ENCODE measurements at regions of chr4 and their contacts with region 1.

Region 1: GRCh38 chr4:35970366-35970960 is 273.9 kb downstream of the ARAP2 start:
- DNase-seq: no peak
- H3K4me3 Mint-ChIP-seq: no peak overlapping the region
- H3K27ac Mint-ChIP-seq: no peak overlapping the region
- H3K4me1 Mint-ChIP-seq: peaks cover 7% of the 10 kb centered on the region
- H3K27me3 Mint-ChIP-seq: peaks cover 5% of the 10 kb centered on the region

Region 2: DNA sequence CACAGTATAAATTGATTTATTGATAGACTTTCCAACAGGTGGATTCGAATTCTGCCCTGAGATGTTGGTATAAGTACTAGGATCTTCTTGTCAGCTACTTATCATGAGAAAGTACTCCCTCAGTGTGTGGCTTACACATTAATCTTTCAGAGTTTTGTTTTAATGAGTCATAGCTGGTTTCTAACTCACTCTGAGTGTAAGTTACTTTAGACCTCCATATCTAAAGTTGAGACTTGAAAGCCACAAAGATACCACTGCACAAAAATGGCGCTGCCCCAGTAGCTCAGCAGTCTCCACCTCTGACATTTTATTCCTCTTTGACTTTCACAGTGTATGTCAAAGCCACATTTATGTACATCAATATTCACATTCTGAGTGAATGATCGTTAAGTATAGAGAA is 44.7 kb before region 1 on chr4:
- intact Hi-C with region 1: no loop called
- DNase-seq: no peak
- H3K4me3 Mint-ChIP-seq: no peak overlapping the region
- H3K27ac Mint-ChIP-seq: no peak overlapping the region
- H3K4me1 Mint-ChIP-seq: peaks cover 6% of the 10 kb centered on the region
- H3K27me3 Mint-ChIP-seq: peaks cover 8% of the 10 kb centered on the region

Region 3: DNA sequence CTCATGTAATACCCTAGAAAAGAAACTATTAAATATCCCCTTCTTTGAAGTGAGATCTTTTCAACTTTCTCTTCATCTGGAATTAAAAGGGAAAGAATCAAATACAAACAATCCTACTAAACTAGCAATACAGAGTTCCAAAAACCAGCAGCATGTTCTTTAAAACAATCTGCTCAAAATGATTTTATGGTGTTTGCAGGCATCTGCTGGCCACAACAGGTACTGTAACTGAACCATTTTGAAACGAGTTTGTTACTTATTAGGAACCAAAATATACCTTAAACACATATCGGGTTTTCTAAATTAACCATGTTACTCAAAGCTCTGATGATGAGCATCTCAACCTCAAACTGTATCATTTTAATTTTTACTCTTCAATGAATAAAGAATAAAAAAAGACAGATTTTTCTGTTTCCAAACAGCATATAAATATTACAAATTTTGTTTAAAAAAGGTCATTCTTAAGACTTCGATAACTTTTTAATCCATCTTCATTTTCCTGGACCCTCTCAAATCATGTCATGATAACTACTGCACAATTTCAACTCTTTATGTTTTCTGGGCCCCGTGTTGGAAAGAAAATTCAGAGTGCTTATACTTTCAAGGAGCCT is 217.4 kb after region 1 on chr4:
- intact Hi-C with region 1: loop called (anchors 10 kb)
- DNase-seq: no peak
- H3K4me3 Mint-ChIP-seq: no peak overlapping the region
- H3K27ac Mint-ChIP-seq: no peak overlapping the region
- H3K4me1 Mint-ChIP-seq: peaks cover 39% of the 10 kb centered on the region
- H3K27me3 Mint-ChIP-seq: no peaks in the 10 kb centered on the region

Measured in activated T-helper 2 cell treated with anti-CD3 and anti-CD28 coated beads, Interferon-gamma antibody, Interleukin-2, Interleukin-4, amounts not matched to agents 10 μg/mL and 5 μg/mL and 100 μg/mL, durations not matched to agents 14 hours and 24 hours and 36 hours (primary cell).